ENCODE measurements at regions of chr6 and their contacts with region 1.

Region 1: GRCh38 chr6:108848116-108848868 is at the start of gene ARMC2:
- DNase-seq: peak; percentile 95
- ATAC-seq: peak; percentile 93
- H3K4me3 ChIP-seq: peak within 1 kb of the TSS; percentile 53 to 85 (median 78)
- H3K4me3 Mint-ChIP-seq: peak within 1 kb of the TSS; percentile 93
- H3K27ac ChIP-seq: peak within 1 kb of the TSS; percentile 48 to 77
- H3K27ac Mint-ChIP-seq: peak within 1 kb of the TSS; percentile 94
- H3K4me1 ChIP-seq: peaks cover 9 to 12% of the 10 kb centered on the region in 2 donors
- H3K4me1 Mint-ChIP-seq: peaks cover 13% of the 10 kb centered on the region
- H3K27me3 ChIP-seq: peaks cover 0 to 2% (median 0%) of the 10 kb centered on the region in 4 experiments
- H3K27me3 Mint-ChIP-seq: no peaks in the 10 kb centered on the region
- CTCF ChIP-seq: no peak
- total RNA-seq, gene ARMC2: 4.9 and 9.9 TPM in 2 replicates

Region 2: DNA sequence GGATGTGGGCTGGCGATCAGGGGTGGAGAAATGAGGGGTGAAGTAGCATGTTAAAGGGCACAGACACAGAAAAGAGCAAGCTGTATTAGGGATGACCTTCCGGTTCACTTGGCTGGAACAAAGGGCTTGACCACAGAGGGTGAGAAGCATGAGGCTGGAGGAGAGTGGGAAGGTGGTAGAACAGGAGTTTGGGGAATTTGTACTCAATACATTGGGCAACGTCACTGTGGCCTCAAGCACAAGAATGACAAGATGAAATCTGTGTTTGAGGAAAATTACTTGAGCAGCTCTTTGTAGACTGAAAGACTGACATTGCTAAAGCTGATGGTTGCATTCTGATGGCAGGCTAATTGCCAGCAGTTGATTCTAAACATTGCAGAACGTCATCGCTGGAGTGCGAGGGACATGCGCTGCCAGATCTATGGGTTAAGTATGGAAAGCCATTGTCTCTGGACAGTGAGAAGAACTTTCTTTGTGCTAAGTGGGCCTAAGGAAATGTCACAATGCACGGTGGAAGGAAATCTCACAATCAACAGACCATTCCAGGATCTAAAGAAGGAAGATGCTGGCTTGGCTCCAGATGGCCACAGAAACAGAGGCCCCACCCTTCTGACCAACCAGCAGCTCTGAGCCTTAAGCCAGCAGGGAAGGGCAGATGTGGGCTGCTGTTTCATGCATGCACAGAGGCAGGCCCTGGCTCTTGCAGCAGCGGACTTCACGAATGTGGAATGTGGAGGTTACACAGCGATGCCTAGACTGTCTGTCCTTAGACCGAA is 1202.3 kb before region 1 on chr6:
- CTCF ChIA-PET with region 1: no interaction called
- POLR2A ChIA-PET with region 1: no interaction called
- intact Hi-C with region 1: no loop called
- DNase-seq: no peak
- ATAC-seq: no peak
- H3K4me3 ChIP-seq: no peak overlapping the region
- H3K4me3 Mint-ChIP-seq: no peak overlapping the region
- H3K27ac ChIP-seq: no peak overlapping the region
- H3K27ac Mint-ChIP-seq: peak overlapping the region; percentile 5
- H3K4me1 ChIP-seq: peaks cover 44 to 51% of the 10 kb centered on the region in 2 donors
- H3K4me1 Mint-ChIP-seq: peaks cover 53% of the 10 kb centered on the region
- H3K27me3 ChIP-seq: no peaks in the 10 kb centered on the region
- H3K27me3 Mint-ChIP-seq: no peaks in the 10 kb centered on the region
- CTCF ChIP-seq: no peak

Region 3: GRCh38 chr6:108541838-108542759 is 306.2 kb before region 1 on chr6:
- CTCF ChIA-PET with region 1: interaction called, 23 read pairs
- POLR2A ChIA-PET with region 1: no interaction called
- intact Hi-C with region 1: no loop called
- DNase-seq: peak; percentile 87
- ATAC-seq: peak; percentile 84
- H3K4me3 ChIP-seq: no peak overlapping the region
- H3K4me3 Mint-ChIP-seq: no peak overlapping the region
- H3K27ac ChIP-seq: no peak overlapping the region
- H3K27ac Mint-ChIP-seq: no peak overlapping the region
- H3K4me1 ChIP-seq: peaks cover 15 to 17% of the 10 kb centered on the region in 2 donors
- H3K4me1 Mint-ChIP-seq: peaks cover 12% of the 10 kb centered on the region
- H3K27me3 ChIP-seq: peaks cover 0 to 2% (median 0%) of the 10 kb centered on the region in 4 experiments
- H3K27me3 Mint-ChIP-seq: peaks cover 9% of the 10 kb centered on the region
- CTCF ChIP-seq: peak; percentile 93

Region 4: GRCh38 chr6:108835218-108835850 is 13.0 kb before region 1 on chr6:
- CTCF ChIA-PET with region 1: interaction called, 30 read pairs
- POLR2A ChIA-PET with region 1: no interaction called
- intact Hi-C with region 1: loop called (anchors 2 kb)
- DNase-seq: peak; percentile 86
- ATAC-seq: peak; percentile 96
- H3K4me3 ChIP-seq: no peak overlapping the region
- H3K4me3 Mint-ChIP-seq: no peak overlapping the region
- H3K27ac ChIP-seq: no peak overlapping the region
- H3K27ac Mint-ChIP-seq: no peak overlapping the region
- H3K4me1 ChIP-seq: peaks cover 14 to 17% of the 10 kb centered on the region in 2 donors
- H3K4me1 Mint-ChIP-seq: peaks cover 25% of the 10 kb centered on the region
- H3K27me3 ChIP-seq: peaks cover 0 to 6% (median 2%) of the 10 kb centered on the region in 4 experiments
- H3K27me3 Mint-ChIP-seq: peaks cover 15% of the 10 kb centered on the region
- CTCF ChIP-seq: peak; percentile 92

Region 5: DNA sequence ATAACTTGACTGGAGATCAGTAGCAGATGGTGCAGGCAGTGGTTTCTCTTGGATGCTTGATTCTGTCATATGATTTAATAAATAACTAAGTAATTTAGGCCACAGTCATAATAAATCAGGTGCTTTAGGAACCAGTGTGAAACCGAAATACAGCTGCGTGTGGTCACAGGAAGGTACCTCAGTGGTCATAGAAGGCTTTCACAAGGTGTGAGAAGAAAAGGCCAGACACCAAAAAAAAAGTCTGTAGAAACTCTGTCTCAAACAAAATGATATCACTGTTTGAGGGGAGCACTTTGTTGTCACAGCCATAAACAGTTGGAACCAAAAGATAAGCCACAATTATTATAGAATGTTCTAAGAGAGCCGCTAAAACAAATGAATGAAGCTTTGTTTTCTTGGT is 56.4 kb after region 1 on chr6:
- CTCF ChIA-PET with region 1: interaction called, 3 read pairs
- POLR2A ChIA-PET with region 1: no interaction called
- intact Hi-C with region 1: loop called (anchors 2 kb)
- DNase-seq: peak; percentile 56
- ATAC-seq: peak; percentile 49
- H3K4me3 ChIP-seq: no peak overlapping the region
- H3K4me3 Mint-ChIP-seq: peak overlapping the region; percentile 44
- H3K27ac ChIP-seq: peak overlapping the region; percentile 46 to 77
- H3K27ac Mint-ChIP-seq: peak overlapping the region; percentile 80
- H3K4me1 ChIP-seq: peaks cover 50 to 54% of the 10 kb centered on the region in 2 donors
- H3K4me1 Mint-ChIP-seq: peaks cover 42% of the 10 kb centered on the region
- H3K27me3 ChIP-seq: no peaks in the 10 kb centered on the region
- H3K27me3 Mint-ChIP-seq: no peaks in the 10 kb centered on the region
- CTCF ChIP-seq: no peak

Measured in B cell (primary cell).